ENCODE measurements at regions of chr7 and their contacts with region 1.

Region 1: DNA sequence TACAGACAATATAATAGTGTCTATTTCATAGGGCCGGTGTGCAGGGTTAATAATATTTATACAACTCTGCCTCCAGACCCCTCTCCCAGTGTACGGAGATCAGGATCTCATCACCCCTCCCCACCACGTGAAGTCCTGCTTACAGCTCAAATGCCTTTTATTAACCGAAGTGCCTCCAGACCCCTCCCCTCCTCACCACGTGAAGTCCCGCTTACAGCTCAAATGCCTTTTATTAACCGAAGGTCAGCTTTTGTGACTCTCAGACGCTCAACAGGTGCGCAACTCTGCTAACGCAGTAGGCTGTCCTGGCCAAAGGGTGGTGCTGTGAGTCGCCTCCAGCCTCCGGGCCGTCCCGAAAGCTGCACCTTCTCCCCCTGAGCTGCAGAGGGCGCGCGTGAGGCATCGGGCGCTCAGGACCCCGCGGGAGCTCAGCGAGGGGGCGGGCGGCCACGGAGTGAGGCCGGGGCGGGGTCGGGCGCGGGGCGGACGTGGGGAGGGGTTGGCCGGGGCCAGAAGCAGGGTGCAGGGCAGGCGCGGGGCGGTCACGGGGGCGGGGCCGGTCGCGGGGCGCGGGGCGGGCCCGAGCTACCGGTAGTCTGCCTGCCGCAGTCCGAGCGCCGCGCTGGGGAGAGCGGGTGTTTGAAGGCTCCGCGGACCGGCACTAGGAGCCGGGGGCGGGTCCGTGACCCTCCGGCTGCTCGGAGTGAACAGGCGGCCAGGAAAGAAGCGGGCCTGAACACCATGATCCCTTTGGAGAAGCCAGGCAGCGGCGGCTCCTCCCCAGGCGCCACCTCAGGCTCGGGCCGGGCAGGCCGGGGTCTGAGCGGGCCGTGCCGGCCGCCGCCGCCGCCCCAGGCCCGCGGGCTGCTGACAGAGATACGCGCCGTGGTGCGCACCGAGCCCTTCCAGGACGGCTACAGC is at the start of gene STK17A:
- DNase-seq: peak; percentile 94
- H3K4me3 Mint-ChIP-seq: peak within 1 kb of the TSS; percentile 93
- H3K27ac Mint-ChIP-seq: peak within 1 kb of the TSS; percentile 95
- H3K4me1 Mint-ChIP-seq: peaks cover 16% of the 10 kb centered on the region
- H3K27me3 Mint-ChIP-seq: no peaks in the 10 kb centered on the region
- CTCF ChIP-seq: peak; percentile 97
- total RNA-seq, gene STK17A: 27.2 and 51.6 TPM in 2 replicates

Region 2: DNA sequence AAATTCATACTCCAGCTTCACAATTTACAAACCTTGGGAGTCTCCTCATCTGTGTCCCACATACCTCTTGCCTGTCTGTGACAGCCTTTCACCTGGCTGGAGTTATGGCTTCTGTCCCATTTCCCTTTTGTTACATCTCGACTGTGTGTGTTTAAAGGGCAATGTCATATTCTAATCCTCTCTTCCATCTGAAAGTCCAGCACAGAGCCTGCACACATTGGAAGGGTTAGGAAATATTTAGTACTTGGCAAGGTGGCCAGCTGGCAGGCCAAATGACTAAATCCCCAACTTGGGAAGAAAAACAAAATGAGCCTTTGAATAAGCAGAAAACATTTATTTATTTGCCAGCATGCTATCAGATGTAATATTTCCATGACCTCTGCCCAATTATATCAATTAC is 119.9 kb before region 1 on chr7:
- CTCF ChIA-PET with region 1: interaction called, 10 read pairs
- POLR2A ChIA-PET with region 1: interaction called, 30 read pairs
- intact Hi-C with region 1: no loop called
- DNase-seq: peak; percentile 68
- H3K4me3 Mint-ChIP-seq: peak overlapping the region; percentile 53
- H3K27ac Mint-ChIP-seq: peak overlapping the region; percentile 76
- H3K4me1 Mint-ChIP-seq: peaks cover 39% of the 10 kb centered on the region
- H3K27me3 Mint-ChIP-seq: no peaks in the 10 kb centered on the region
- CTCF ChIP-seq: no peak

Region 3: GRCh38 chr7:43559171-43559936 is 23.4 kb before region 1 on chr7:
- CTCF ChIA-PET with region 1: interaction called, 8 read pairs
- POLR2A ChIA-PET with region 1: interaction called, 39 read pairs
- intact Hi-C with region 1: no loop called
- DNase-seq: peak; percentile 84
- H3K4me3 Mint-ChIP-seq: peak overlapping the region; percentile 8
- H3K27ac Mint-ChIP-seq: peak overlapping the region; percentile 84
- H3K4me1 Mint-ChIP-seq: peaks cover 58% of the 10 kb centered on the region
- H3K27me3 Mint-ChIP-seq: no peaks in the 10 kb centered on the region
- CTCF ChIP-seq: no peak

Region 4: GRCh38 chr7:43639858-43640491 is 57.2 kb after region 1 on chr7:
- CTCF ChIA-PET with region 1: interaction called, 23 read pairs
- POLR2A ChIA-PET with region 1: interaction called, 107 read pairs
- intact Hi-C with region 1: loop called (anchors 2 kb)
- DNase-seq: peak; percentile 72
- H3K4me3 Mint-ChIP-seq: no peak overlapping the region
- H3K27ac Mint-ChIP-seq: peak overlapping the region; percentile 84
- H3K4me1 Mint-ChIP-seq: peaks cover 38% of the 10 kb centered on the region
- H3K27me3 Mint-ChIP-seq: no peaks in the 10 kb centered on the region
- CTCF ChIP-seq: no peak

Region 5: GRCh38 chr7:43700059-43700501 is 117.3 kb after region 1 on chr7:
- CTCF ChIA-PET with region 1: interaction called, 211 read pairs
- POLR2A ChIA-PET with region 1: interaction called, 182 read pairs
- intact Hi-C with region 1: loop called (anchors 1 kb)
- DNase-seq: peak; percentile 64
- H3K4me3 Mint-ChIP-seq: no peak overlapping the region
- H3K27ac Mint-ChIP-seq: no peak overlapping the region
- H3K4me1 Mint-ChIP-seq: peaks cover 5% of the 10 kb centered on the region
- H3K27me3 Mint-ChIP-seq: no peaks in the 10 kb centered on the region
- CTCF ChIP-seq: peak; percentile 69

Region 6: DNA sequence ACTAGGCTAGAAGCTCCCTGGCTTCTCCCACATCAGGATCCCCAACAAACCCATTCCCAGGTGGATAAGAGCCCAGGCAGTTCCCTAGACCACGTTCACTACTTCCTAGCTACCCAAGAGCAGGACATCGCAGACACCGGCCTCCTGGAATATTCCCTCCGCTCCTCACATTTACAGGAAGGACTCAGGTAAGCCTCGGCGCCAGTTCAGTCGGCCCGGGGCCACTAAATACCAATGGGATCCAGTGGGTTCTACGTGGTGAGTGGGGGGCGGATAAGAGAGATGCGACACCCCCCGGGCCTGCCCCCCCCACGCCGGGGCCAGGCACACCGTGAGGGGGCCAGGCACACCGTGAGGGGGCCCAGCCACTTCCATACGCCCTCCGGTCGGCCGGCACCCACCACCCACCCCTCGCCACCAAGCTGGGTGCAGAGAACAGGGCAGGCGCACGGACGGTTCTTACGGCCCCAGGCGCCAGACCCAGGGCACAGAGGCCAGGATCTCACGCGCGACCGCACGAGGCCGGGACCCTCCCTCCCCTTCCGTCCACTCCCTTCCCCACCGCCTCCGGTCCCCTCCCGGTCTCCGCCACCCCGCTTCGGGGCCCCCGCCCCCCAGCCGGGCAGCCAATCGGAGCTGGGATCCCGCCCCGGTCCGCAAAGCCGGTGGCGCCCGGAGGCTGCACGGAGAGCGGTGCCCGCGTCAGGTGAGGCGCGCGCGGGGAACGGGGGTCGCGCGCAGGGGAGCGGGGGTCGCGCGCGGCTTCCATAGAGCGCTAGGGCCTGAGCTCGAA is 175.5 kb after region 1 on chr7 and contains the start of gene BLVRA:
- CTCF ChIA-PET with region 1: interaction called, 8 read pairs
- POLR2A ChIA-PET with region 1: interaction called, 11 read pairs
- intact Hi-C with region 1: no loop called
- DNase-seq: peak; percentile 50
- H3K4me3 Mint-ChIP-seq: peak within 1 kb of the TSS; percentile 72
- H3K27ac Mint-ChIP-seq: peak within 1 kb of the TSS; percentile 83
- H3K4me1 Mint-ChIP-seq: peaks cover 41% of the 10 kb centered on the region
- H3K27me3 Mint-ChIP-seq: no peaks in the 10 kb centered on the region
- CTCF ChIP-seq: no peak
- total RNA-seq, gene BLVRA: 41.2 and 46.0 TPM in 2 replicates

Region 7: DNA sequence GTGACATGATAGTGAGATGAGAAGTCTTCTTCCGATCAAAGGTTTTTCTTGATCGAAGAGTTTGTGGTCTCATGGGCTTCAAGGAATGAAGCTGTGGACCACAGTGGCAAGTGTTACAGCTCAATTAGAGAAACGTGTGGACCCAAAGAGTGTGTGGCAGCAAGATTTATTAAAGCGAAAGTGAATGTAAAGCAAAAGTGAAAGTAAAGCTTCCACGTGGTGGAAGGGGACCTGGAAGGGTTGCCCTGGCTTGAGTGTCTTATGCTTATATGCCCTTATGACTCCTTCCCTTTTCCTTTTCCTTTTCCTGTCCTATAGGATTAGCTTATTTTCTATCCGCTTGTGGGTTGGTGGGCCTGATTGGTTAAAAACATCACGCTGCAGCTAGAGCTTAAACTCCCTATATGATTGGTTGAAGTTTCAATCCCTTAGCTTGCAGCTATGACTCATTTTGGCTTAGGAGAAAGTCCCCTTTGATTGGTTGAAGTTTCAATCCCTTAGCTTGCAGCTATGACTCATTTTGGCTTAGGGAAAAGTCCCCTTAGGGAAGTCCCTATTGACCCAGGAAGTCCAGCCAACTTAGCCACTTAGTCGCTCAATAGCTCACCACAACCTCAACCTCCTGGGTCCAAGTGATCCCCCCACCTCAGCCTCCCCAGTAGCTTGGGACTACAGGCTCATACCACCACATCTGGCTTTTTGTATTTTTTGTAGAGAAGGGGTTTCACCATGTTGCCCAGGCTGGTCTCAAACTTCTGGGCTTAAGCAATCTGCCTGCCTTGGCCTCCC is 251.9 kb after region 1 on chr7:
- CTCF ChIA-PET with region 1: interaction called, 84 read pairs
- POLR2A ChIA-PET with region 1: interaction called, 28 read pairs
- intact Hi-C with region 1: loop called (anchors 1 kb)
- DNase-seq: peak; percentile 18
- H3K4me3 Mint-ChIP-seq: no peak overlapping the region
- H3K27ac Mint-ChIP-seq: no peak overlapping the region
- H3K4me1 Mint-ChIP-seq: no peaks in the 10 kb centered on the region
- H3K27me3 Mint-ChIP-seq: peaks cover under 1% of the 10 kb centered on the region
- CTCF ChIP-seq: no peak